ENCODE measurements at regions of chr10 and their contacts with region 1.

Region 1: DNA sequence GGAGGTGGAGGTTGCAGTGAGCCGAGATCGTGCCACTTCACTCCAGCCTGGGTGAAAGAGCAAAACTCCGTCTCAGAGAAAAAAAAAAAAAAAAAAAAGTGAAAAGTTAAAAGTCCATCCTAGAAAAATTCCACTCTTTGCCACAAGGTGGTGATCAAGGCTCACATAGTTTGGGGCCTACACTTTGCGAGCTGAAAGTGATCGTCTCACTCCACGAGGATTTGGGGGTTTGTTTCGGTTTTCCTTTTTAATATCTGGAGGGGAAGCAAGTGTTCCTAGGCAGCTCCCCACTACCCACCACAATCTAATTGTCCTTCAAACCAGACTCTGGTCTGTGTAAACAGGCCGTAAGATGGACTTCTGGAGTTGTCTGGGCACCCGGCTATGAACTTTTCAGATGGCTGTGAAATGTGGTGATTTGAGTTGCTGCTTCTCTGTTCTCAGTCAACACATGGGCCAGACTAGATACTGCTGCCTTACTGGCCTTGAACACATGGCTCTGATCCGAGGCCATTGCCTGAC is 27.1 kb downstream of the PRLHR start:
- DNase-seq: peak in 1 of 2 experiments; percentile 54
- H3K4me3 ChIP-seq: no peak overlapping the region
- H3K27ac ChIP-seq: no peak overlapping the region
- H3K4me1 ChIP-seq: peaks cover 0 to 7% (median 2%) of the 10 kb centered on the region in 4 experiments; a peak in 3 of 7 replicates
- H3K27me3 ChIP-seq: no peaks in the 10 kb centered on the region; a peak in 1 of 7 replicates
- CTCF ChIP-seq: peak; percentile 25 to 70 (median 50)
- EP300 ChIP-seq: no peak
- POLR2A ChIP-seq: no peak
- RAD21 ChIP-seq: peak; percentile 79 to 80

Region 2: DNA sequence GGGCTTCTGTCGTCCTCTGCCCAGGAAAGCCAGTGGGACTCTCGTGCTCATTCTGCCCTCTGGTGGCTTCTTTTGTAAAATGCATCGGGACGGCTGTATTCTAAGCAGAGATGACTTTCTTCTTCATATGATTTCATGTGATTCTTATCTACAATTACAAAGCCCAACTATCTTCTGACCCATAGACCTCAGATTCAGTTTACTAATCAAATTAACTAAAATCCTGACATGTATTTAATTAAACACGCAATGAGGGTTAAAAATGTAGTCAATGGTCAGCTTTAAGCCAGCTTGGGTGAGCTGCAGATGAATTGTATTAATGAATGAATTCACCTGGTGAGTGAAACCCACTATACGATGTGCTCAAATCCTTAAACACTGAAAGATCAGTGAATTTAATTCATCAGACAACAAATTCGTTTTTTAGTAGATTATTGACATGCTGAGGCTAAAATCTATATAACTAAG is 108.6 kb before region 1 on chr10:
- CTCF ChIA-PET with region 1: interaction called, 12 read pairs
- POLR2A ChIA-PET with region 1: no interaction called
- DNase-seq: peak; percentile 25 to 69
- H3K4me3 ChIP-seq: no peak overlapping the region
- H3K27ac ChIP-seq: no peak overlapping the region
- H3K4me1 ChIP-seq: no peaks in the 10 kb centered on the region
- H3K27me3 ChIP-seq: no peaks in the 10 kb centered on the region
- CTCF ChIP-seq: peak; percentile 51 to 79 (median 78)
- EP300 ChIP-seq: no peak
- POLR2A ChIP-seq: no peak
- RAD21 ChIP-seq: peak; percentile 85 to 90

Region 3: DNA sequence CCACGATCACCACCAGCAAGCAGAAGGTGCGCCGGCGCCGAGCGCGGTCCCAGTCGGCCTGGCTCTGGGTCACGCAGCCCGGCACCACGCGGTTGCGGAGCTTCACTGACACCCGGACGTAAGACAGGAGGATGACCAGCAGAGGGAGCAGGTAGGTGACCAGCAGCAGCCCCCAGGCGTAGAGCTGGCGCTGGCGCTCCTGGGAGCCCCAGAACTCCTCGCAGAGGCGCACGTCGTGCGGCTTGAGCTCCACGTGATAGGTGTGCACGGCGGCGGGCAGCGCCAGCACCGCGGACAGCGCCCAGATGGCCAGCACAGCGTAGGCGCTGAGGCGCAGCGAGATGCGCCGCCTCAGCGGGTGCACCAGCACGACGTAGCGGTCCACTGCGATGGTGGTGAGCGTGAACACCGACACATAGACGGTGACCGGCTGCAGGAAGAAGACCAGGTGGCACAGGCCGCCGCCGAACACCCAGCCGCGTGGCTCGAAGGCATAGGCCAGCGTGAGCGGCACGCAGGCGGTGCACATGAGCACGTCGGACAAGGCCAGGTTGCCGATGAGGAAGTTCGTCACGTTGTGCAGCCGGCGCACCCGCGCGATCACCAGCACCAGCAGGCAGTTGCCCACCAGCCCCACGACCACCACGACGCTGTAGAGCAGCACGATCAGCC is 26.1 kb after region 1 on chr10:
- CTCF ChIA-PET with region 1: interaction called, 16 read pairs
- POLR2A ChIA-PET with region 1: no interaction called
- DNase-seq: peak; percentile 90 to 93
- H3K4me3 ChIP-seq: peak overlapping the region in 3 of 4 experiments; percentile 6 to 60 (median 26); a peak in 4 of 8 replicates
- H3K27ac ChIP-seq: no peak overlapping the region
- H3K4me1 ChIP-seq: peaks cover 0 to 17% (median 12%) of the 10 kb centered on the region in 4 experiments; a peak in 5 of 7 replicates
- H3K27me3 ChIP-seq: peaks cover 17 to 41% (median 33%) of the 10 kb centered on the region in 4 experiments
- CTCF ChIP-seq: peak; percentile 85 to 98 (median 91)
- EP300 ChIP-seq: peak in 1 of 2 experiments; percentile 63; a peak in 1 of 3 replicates
- POLR2A ChIP-seq: no peak
- RAD21 ChIP-seq: peak; percentile 77 to 85

Region 4: GRCh38 chr10:118669020-118669791 is 100.8 kb after region 1 on chr10:
- CTCF ChIA-PET with region 1: interaction called, 24 read pairs
- POLR2A ChIA-PET with region 1: no interaction called
- DNase-seq: no peak
- H3K4me3 ChIP-seq: no peak overlapping the region
- H3K27ac ChIP-seq: no peak overlapping the region
- H3K4me1 ChIP-seq: no peaks in the 10 kb centered on the region; a peak in 1 of 7 replicates
- H3K27me3 ChIP-seq: no peaks in the 10 kb centered on the region
- CTCF ChIP-seq: no peak
- EP300 ChIP-seq: no peak
- POLR2A ChIP-seq: no peak
- RAD21 ChIP-seq: no peak

Region 5: GRCh38 chr10:118720685-118721538 is 152.5 kb after region 1 on chr10:
- CTCF ChIA-PET with region 1: interaction called, 65 read pairs
- POLR2A ChIA-PET with region 1: no interaction called
- DNase-seq: peak in 1 of 2 experiments; percentile 73
- H3K4me3 ChIP-seq: no peak overlapping the region
- H3K27ac ChIP-seq: no peak overlapping the region
- H3K4me1 ChIP-seq: no peaks in the 10 kb centered on the region
- H3K27me3 ChIP-seq: no peaks in the 10 kb centered on the region
- CTCF ChIP-seq: peak in 2 of 3 experiments; percentile 43 to 55; a peak in 2 of 4 replicates
- EP300 ChIP-seq: no peak
- POLR2A ChIP-seq: no peak
- RAD21 ChIP-seq: peak; percentile 63 to 64